ENCODE measurements at regions of chr11 and their contacts with region 1.

Region 1: DNA sequence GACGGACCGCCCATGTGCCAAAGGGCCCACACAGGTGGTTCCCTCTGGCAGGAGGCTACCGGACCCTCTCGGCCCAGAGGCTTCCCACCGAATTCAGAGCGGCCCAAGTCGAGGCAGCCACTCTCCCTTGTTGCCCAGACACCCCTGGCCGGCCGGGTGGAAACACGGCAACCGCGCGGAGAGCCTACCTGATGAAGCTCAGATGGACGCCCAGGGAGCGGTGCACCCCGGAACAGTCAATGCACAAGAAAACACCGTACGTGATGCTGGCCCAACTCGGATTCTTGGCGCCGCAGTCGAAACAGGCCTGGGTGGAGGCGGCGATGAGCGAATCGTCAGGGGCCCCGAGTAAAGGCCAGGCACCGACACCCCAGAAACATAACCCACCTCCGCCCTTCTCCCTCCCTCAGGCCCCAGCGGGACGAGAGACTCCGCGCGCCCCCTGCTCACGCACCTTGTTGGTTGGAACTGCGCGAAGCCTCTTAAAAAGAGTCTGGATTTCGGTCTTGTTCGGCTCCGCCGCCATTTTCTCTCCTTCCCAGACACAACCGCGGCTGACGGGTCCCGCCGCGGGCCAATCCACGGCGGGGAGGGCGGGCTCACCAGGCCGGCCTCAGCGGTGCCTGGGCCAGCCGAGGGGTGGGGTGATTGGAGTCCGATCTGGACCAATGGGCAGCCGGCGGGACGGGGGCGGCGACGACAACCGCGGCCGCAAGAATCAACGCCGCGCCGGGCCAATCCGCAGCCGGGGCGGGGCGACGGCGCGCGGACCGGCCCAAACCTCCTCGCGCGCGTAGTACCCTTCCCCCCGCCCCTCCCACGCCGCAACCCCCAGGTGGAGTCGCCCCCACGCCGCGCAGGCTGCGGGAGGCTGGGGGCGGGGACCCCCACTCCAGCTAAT is at the start of gene ARFGAP2:
- DNase-seq: no peak
- ATAC-seq: peak; percentile 95
- H3K4me3 ChIP-seq: peak within 1 kb of the TSS; percentile 99 to 100
- H3K27ac ChIP-seq: peak within 1 kb of the TSS; percentile 93
- H3K4me1 ChIP-seq: peaks cover 14% of the 10 kb centered on the region
- H3K27me3 ChIP-seq: no peaks in the 10 kb centered on the region
- CTCF ChIP-seq: no peak
- total RNA-seq, gene ARFGAP2: 61.4 TPM

Region 2: GRCh38 chr11:47004595-47005033 is 172.0 kb before region 1 on chr11:
- CTCF ChIA-PET with region 1: no interaction called
- POLR2A ChIA-PET with region 1: no interaction called
- in situ Hi-C with region 1: no loop called
- intact Hi-C with region 1: no loop called
- DNase-seq: no peak
- ATAC-seq: peak; percentile 73
- H3K4me3 ChIP-seq: no peak overlapping the region
- H3K27ac ChIP-seq: no peak overlapping the region
- H3K4me1 ChIP-seq: no peaks in the 10 kb centered on the region
- H3K27me3 ChIP-seq: no peaks in the 10 kb centered on the region
- CTCF ChIP-seq: no peak

Region 3: GRCh38 chr11:47143322-47143721 is 33.3 kb before region 1 on chr11:
- CTCF ChIA-PET with region 1: no interaction called
- POLR2A ChIA-PET with region 1: no interaction called
- in situ Hi-C with region 1: no loop called
- intact Hi-C with region 1: no loop called
- DNase-seq: no peak
- ATAC-seq: peak; percentile 67; the same call in 1 of the 2 replicates
- H3K4me3 ChIP-seq: no peak overlapping the region
- H3K27ac ChIP-seq: no peak overlapping the region
- H3K4me1 ChIP-seq: no peaks in the 10 kb centered on the region
- H3K27me3 ChIP-seq: no peaks in the 10 kb centered on the region
- CTCF ChIP-seq: no peak

Region 4: DNA sequence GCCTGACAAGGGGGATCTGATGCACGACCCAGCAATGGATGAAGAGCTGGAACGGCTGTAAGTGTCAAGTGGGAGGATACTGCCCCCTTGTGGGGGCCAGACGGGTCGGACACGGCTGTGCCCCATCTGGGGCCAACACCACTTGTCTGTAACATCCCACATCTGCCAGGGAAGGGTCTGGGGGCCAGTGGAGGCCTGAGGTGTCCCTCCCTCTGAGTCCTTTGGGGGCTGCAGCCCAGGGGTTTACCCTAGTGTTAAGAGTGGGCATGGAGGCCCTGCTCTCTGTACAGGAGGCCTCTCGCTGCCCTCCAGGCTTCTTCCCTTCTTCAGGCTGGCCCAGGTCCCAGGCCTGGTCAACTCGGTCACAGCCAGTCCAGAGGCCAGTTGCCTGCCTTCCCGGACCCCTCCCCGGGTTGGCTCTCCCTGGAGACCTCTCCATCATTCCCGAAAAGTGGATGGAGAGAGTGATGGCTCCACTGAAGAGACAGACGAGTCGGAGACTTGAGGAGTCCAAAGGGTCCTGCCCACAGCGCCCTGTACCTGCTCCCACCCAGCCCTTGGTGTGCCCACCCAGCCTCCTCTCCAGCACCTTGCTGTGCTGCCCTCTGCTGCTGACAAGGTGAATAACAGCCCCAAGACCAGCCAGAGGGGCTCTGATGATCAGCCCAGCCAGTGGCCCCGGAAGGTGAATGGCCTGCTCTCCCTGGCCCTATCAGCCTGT is 15.3 kb before region 1 on chr11:
- CTCF ChIA-PET with region 1: interaction called, 5 read pairs
- POLR2A ChIA-PET with region 1: interaction called, 12 read pairs
- in situ Hi-C with region 1: no loop called
- intact Hi-C with region 1: no loop called
- DNase-seq: no peak
- ATAC-seq: peak; percentile 88
- H3K4me3 ChIP-seq: no peak overlapping the region
- H3K27ac ChIP-seq: no peak overlapping the region
- H3K4me1 ChIP-seq: peaks cover 5% of the 10 kb centered on the region; the same call in 1 of the 2 replicates
- H3K27me3 ChIP-seq: no peaks in the 10 kb centered on the region
- CTCF ChIP-seq: peak; percentile 89

Region 5: GRCh38 chr11:47186937-47187695 is 10.5 kb after region 1 on chr11:
- CTCF ChIA-PET with region 1: interaction called, 4 read pairs
- POLR2A ChIA-PET with region 1: interaction called, 14 read pairs
- in situ Hi-C with region 1: no loop called
- intact Hi-C with region 1: no loop called
- DNase-seq: peak; percentile 64
- ATAC-seq: peak; percentile 79
- H3K4me3 ChIP-seq: peak overlapping the region; percentile 56 to 64
- H3K27ac ChIP-seq: peak overlapping the region; percentile 62
- H3K4me1 ChIP-seq: peaks cover 30% of the 10 kb centered on the region
- H3K27me3 ChIP-seq: no peaks in the 10 kb centered on the region
- CTCF ChIP-seq: no peak; the same call in 1 of the 2 replicates

Region 6: DNA sequence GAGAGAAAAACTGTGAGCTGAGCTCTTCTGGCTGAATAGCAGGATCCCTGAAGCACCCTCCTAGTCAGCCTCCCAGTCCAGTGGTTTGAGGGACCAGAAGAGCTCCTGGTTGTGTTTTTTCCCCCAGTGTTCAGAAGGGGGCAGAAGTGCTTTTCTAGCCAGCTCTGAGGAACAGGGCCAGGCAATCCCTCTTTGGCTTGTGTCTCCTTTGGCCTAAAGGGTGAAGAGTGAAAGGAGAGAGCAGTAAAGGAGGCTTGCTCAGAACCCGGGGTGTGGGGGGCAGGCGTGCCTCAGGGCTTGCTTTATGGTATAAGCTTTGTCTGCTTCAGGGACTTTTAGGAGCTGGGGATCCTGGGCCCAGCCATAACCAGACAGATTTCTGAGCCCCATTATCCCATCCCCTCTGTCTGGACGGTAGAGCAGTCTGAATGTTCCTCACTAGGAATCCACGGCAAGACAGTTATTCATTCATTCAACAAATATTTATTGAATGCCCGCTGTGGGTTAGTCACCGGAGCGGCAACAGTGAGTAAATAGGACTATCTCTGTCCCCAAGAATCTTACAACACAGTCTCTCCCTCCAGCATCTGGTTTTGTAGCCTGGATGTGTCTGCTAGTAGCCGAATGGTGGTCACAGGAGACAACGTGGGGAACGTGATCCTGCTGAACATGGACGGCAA is 57.6 kb after region 1 on chr11:
- CTCF ChIA-PET with region 1: interaction called, 5 read pairs
- POLR2A ChIA-PET with region 1: interaction called, 11 read pairs
- in situ Hi-C with region 1: no loop called
- intact Hi-C with region 1: no loop called
- DNase-seq: peak; percentile 86
- ATAC-seq: peak; percentile 84
- H3K4me3 ChIP-seq: peak overlapping the region; percentile 22 to 51
- H3K27ac ChIP-seq: peak overlapping the region; percentile 83
- H3K4me1 ChIP-seq: peaks cover 20% of the 10 kb centered on the region
- H3K27me3 ChIP-seq: no peaks in the 10 kb centered on the region
- CTCF ChIP-seq: peak; percentile 81; the same call in 1 of the 2 replicates

Region 7: DNA sequence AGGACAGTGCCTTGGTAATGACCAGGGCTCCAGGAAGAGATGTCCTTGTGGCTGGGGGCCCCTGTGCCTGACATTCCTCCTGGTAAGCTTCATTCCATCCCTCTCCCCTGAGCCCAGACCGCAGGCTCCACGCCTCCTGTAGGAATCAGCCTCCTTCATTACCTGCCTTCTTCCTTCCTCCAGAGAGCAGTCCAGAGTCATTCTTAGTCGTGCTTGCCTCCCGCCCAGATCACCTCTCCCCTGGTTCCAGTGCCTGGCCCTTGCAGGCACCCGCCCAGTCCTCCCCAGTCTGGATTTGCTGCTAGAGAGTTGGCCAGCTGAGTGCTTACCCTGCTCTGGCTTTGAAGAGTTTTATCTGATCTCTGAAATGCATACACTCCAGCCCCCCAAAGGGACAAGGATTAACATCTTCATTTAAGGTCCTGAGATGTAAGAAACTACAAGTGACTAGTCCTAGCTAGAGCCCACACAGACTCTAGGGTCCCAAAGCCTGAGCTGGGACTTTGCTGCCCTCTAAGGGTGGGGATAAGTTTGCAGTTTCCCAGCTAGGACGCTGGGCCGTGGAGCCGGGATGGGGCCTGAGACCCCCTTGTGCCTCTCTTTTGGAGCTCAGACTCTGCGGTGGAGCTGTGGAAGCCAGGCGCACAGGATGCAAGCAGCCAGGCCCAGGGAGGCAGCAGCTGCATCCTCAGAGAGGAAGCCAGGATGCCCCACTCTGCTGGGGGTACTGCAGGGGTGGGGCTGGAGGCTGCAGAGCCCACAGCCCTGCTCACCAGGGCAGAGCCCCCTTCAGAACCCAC is 82.8 kb after region 1 on chr11:
- CTCF ChIA-PET with region 1: interaction called, 6 read pairs
- POLR2A ChIA-PET with region 1: no interaction called
- in situ Hi-C with region 1: no loop called
- intact Hi-C with region 1: loop called (anchors 10 kb)
- DNase-seq: no peak
- ATAC-seq: peak; percentile 82
- H3K4me3 ChIP-seq: no peak overlapping the region
- H3K27ac ChIP-seq: 0 out of 2 replicates have a peak overlapping the region, but pooled peaks have one; percentile 11
- H3K4me1 ChIP-seq: peaks cover 31% of the 10 kb centered on the region
- H3K27me3 ChIP-seq: no peaks in the 10 kb centered on the region
- CTCF ChIP-seq: peak; percentile 87

Region 8: GRCh38 chr11:47355283-47356128 is 178.9 kb after region 1 on chr11:
- CTCF ChIA-PET with region 1: no interaction called
- POLR2A ChIA-PET with region 1: no interaction called
- in situ Hi-C with region 1: no loop called
- intact Hi-C with region 1: loop called (anchors 10 kb)
- DNase-seq: peak; percentile 79
- ATAC-seq: peak; percentile 96
- H3K4me3 ChIP-seq: peak overlapping the region; percentile 19 to 36
- H3K27ac ChIP-seq: no peak overlapping the region
- H3K4me1 ChIP-seq: no peaks in the 10 kb centered on the region
- H3K27me3 ChIP-seq: no peaks in the 10 kb centered on the region
- CTCF ChIP-seq: peak; percentile 100

Measured in Panc1 (cell line).